MCF 10A (cell line): ENCODE measurements at regions of chr19 and their contacts with region 1.

Region 1: GRCh38 chr19:38335949-38336637 is 463 bp downstream of the CATSPERG start:
- DNase-seq: peak; percentile 98
- H3K4me3 Mint-ChIP-seq: peak overlapping the region; percentile 97
- H3K27ac Mint-ChIP-seq: peak overlapping the region; percentile 88
- H3K4me1 Mint-ChIP-seq: peaks cover 14% of the 10 kb centered on the region
- H3K27me3 Mint-ChIP-seq: no peaks in the 10 kb centered on the region
- CTCF ChIP-seq: no peak

Region 2: GRCh38 chr19:38142176-38143035 is 193.7 kb before region 1 on chr19:
- CTCF ChIA-PET with region 1: interaction called, 3 read pairs
- POLR2A ChIA-PET with region 1: no interaction called
- intact Hi-C with region 1: loop called (anchors 1 kb)
- DNase-seq: peak; percentile 76
- H3K4me3 Mint-ChIP-seq: no peak overlapping the region
- H3K27ac Mint-ChIP-seq: no peak overlapping the region
- H3K4me1 Mint-ChIP-seq: peaks cover 17% of the 10 kb centered on the region
- H3K27me3 Mint-ChIP-seq: no peaks in the 10 kb centered on the region
- CTCF ChIP-seq: peak; percentile 83

Region 3: DNA sequence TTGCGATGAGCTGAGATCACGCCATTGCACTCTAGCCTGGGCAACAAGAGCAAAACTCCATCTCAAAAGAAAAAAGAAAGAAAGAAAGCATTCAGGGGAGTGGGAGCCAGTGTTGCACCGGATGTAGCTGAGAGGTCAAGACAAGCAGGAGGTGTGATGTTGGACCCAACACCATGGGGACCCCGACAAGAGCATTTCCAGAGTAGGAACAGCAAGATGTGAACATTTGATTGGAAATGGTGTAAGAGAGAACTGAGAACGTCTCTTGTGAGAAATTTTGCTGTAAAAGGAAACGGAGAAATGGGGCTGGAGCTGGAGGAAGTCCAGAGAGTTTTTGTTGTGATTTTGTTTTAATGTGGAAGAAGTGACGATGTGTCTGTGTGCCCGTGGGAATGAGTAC is 96.3 kb before region 1 on chr19:
- CTCF ChIA-PET with region 1: interaction called, 102 read pairs
- POLR2A ChIA-PET with region 1: interaction called, 13 read pairs
- intact Hi-C with region 1: loop called (anchors 1 kb)
- DNase-seq: no peak
- H3K4me3 Mint-ChIP-seq: no peak overlapping the region
- H3K27ac Mint-ChIP-seq: peak overlapping the region; percentile 21
- H3K4me1 Mint-ChIP-seq: peaks cover 9% of the 10 kb centered on the region
- H3K27me3 Mint-ChIP-seq: no peaks in the 10 kb centered on the region
- CTCF ChIP-seq: no peak

Region 4: DNA sequence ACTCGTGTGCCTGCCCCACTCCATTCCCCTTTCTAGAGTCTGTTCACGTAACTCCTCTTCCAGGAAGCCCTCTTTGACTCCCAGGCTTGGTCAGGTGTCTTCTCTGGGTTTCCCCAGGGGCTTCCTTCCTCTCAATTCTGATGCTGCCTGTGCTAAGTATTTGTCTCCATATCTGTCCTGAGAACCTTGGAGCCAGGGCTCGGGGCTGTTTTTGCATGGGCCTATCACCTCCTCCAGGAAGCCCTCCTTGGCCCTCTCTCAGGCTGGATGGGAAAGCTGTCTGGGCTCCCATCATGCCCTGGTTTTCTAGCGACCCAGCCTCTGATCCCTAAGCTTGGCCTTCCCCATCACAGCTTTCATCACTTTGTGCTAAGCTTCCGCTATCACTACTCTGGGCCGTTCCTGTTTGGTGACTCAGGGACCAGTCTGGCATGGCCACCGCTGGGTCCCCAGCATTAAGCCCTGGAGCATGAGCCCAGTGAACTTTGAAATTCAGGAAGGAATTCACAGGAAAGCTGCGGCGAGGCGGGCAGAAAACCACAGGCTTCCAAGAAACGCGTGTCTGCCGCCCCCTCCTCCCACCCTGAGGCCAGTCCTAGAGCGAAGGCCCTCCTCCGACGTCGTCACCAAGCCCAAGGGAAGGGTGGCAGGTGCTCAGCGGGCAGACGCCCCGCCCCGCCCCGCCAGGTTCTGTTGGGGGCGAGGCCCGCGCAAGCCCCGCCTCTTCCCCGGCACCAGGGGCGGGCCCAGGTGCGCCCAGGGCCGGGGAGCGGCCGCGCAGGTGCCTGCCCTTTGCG is 72.2 kb before region 1 on chr19:
- CTCF ChIA-PET with region 1: interaction called, 7 read pairs
- POLR2A ChIA-PET with region 1: interaction called, 14 read pairs
- intact Hi-C with region 1: no loop called
- DNase-seq: peak; percentile 91
- H3K4me3 Mint-ChIP-seq: peak overlapping the region; percentile 78
- H3K27ac Mint-ChIP-seq: peak overlapping the region; percentile 82
- H3K4me1 Mint-ChIP-seq: peaks cover 33% of the 10 kb centered on the region
- H3K27me3 Mint-ChIP-seq: no peaks in the 10 kb centered on the region
- CTCF ChIP-seq: no peak

Region 5: DNA sequence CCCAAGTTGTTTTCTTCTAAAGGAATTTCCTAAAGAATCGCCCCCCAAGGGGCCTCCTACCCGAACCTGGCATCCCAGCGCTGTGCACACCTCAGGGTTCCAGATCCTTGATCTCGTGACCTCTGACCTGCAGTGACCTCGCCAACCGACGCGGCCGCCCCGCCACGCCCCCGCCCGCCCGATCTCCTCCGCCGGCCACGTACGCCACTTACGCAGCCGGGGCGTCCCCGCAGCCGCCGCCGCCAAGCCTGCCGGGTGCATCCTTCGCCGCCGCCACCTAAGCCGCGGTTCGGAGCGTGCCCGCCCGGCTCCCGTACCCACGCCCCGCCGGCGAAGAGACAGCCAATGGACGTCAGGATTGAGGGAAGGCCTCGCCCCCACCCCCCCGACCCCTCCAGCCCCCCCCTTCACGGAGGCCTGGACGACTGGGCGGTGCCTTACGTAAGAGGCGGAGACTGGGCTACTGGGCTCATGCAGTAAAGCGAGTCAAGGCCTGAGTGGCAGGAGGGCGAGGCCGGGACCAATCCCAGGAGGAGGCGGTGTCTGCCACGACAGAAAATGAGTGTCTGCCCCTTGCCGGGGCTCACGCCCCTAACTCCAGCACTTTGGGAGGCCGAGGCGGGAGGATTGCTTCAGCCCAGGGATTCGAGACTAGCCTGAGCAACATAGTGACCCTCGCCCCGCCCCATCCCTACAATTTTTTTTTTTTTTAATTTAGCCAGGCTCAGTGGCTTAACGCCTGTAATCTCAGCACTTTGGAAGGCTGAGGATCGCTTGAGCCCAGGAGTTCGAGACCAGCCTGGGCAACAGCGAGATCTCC is 20.2 kb before region 1 on chr19 and contains the start of gene YIF1B:
- CTCF ChIA-PET with region 1: interaction called, 5 read pairs
- POLR2A ChIA-PET with region 1: interaction called, 16 read pairs
- intact Hi-C with region 1: no loop called
- DNase-seq: peak; percentile 98
- H3K4me3 Mint-ChIP-seq: peak within 1 kb of the TSS; percentile 82
- H3K27ac Mint-ChIP-seq: peak within 1 kb of the TSS; percentile 88
- H3K4me1 Mint-ChIP-seq: peaks cover 15% of the 10 kb centered on the region
- H3K27me3 Mint-ChIP-seq: no peaks in the 10 kb centered on the region
- CTCF ChIP-seq: no peak
- total RNA-seq, gene YIF1B: 49.2 and 60.3 TPM in 2 replicates

Region 6: GRCh38 chr19:38387550-38388348 is 51.7 kb after region 1 on chr19 and contains the start of gene GGN:
- CTCF ChIA-PET with region 1: no interaction called
- POLR2A ChIA-PET with region 1: no interaction called
- intact Hi-C with region 1: loop called (anchors 2 kb)
- DNase-seq: peak; percentile 97
- H3K4me3 Mint-ChIP-seq: peak within 1 kb of the TSS; percentile 86
- H3K27ac Mint-ChIP-seq: no peak within 1 kb of the TSS
- H3K4me1 Mint-ChIP-seq: peaks cover 16% of the 10 kb centered on the region
- H3K27me3 Mint-ChIP-seq: no peaks in the 10 kb centered on the region
- CTCF ChIP-seq: no peak
- total RNA-seq, gene GGN: 0.27 and 1.4 TPM in 2 replicates